H1 (cell line): ENCODE measurements at regions of chr3 and their contacts with region 1.

Region 1: GRCh38 chr3:128572644-128573105 is 77.9 kb downstream of the RPN1 start:
- DNase-seq: peak in 1 of 2 experiments; percentile 65
- H3K4me3 ChIP-seq: no peak overlapping the region
- H3K27ac ChIP-seq: no peak overlapping the region
- H3K4me1 ChIP-seq: peaks cover 6 to 13% (median 7%) of the 10 kb centered on the region in 4 experiments; a peak in 6 of 7 replicates
- H3K27me3 ChIP-seq: no peaks in the 10 kb centered on the region
- CTCF ChIP-seq: peak in 2 of 3 experiments; percentile 58 to 79; a peak in 3 of 4 replicates
- EP300 ChIP-seq: no peak
- POLR2A ChIP-seq: no peak
- RAD21 ChIP-seq: peak; percentile 31 to 44; a peak in 3 of 4 replicates

Region 2: DNA sequence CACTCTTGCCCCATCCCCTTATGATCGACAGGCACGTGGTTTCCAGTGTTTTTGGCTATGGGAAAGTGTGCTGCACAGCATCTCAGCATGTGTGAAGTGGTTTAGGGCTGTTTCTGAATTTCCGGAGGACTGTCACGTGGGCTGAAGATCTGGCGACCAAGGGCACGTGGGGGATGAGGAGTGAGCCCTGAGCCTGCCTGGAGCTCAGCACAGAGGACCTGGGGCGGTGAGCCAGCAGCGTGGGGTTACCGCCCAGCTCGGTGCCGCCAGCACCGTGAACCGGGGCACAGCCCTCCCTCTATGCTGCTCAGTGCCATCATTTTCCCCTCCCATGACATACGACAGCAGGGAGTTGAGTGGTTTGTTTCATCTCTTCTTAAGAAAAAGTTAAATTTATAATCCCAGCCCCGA is 256.2 kb before region 1 on chr3:
- CTCF ChIA-PET with region 1: no interaction called
- POLR2A ChIA-PET with region 1: no interaction called
- DNase-seq: peak in 1 of 2 experiments; percentile 40
- H3K4me3 ChIP-seq: no peak overlapping the region
- H3K27ac ChIP-seq: no peak overlapping the region
- H3K4me1 ChIP-seq: peaks cover 0 to 4% (median 0%) of the 10 kb centered on the region in 4 experiments; a peak in 1 of 7 replicates
- H3K27me3 ChIP-seq: no peaks in the 10 kb centered on the region
- CTCF ChIP-seq: no peak
- EP300 ChIP-seq: no peak
- POLR2A ChIP-seq: no peak
- RAD21 ChIP-seq: no peak

Region 3: GRCh38 chr3:128503164-128503651 is 69.5 kb before region 1 on chr3:
- CTCF ChIA-PET with region 1: interaction called, 15 read pairs
- POLR2A ChIA-PET with region 1: no interaction called
- DNase-seq: peak in 1 of 2 experiments; percentile 50
- H3K4me3 ChIP-seq: no peak overlapping the region
- H3K27ac ChIP-seq: no peak overlapping the region; the same call in 1 of the 2 replicates
- H3K4me1 ChIP-seq: peaks cover 0 to 2% (median 0%) of the 10 kb centered on the region in 4 experiments; a peak in 1 of 7 replicates
- H3K27me3 ChIP-seq: peaks cover 0 to 11% (median 10%) of the 10 kb centered on the region in 4 experiments; a peak in 6 of 7 replicates
- CTCF ChIP-seq: peak in 2 of 3 experiments; percentile 56 to 64; a peak in 3 of 4 replicates
- EP300 ChIP-seq: no peak
- POLR2A ChIP-seq: no peak
- RAD21 ChIP-seq: peak; percentile 54 to 70

Region 4: GRCh38 chr3:128515967-128516366 is 56.7 kb before region 1 on chr3:
- CTCF ChIA-PET with region 1: no interaction called
- POLR2A ChIA-PET with region 1: no interaction called
- DNase-seq: no peak
- H3K4me3 ChIP-seq: no peak overlapping the region
- H3K27ac ChIP-seq: no peak overlapping the region
- H3K4me1 ChIP-seq: no peaks in the 10 kb centered on the region
- H3K27me3 ChIP-seq: no peaks in the 10 kb centered on the region
- CTCF ChIP-seq: no peak
- EP300 ChIP-seq: no peak
- POLR2A ChIP-seq: no peak
- RAD21 ChIP-seq: no peak

Region 5: GRCh38 chr3:128549283-128550112 is 23.2 kb before region 1 on chr3:
- CTCF ChIA-PET with region 1: interaction called, 10 read pairs
- POLR2A ChIA-PET with region 1: interaction called, 3 read pairs
- DNase-seq: no peak
- H3K4me3 ChIP-seq: no peak overlapping the region
- H3K27ac ChIP-seq: no peak overlapping the region
- H3K4me1 ChIP-seq: peaks cover 0 to 9% (median 3%) of the 10 kb centered on the region in 4 experiments; a peak in 4 of 7 replicates
- H3K27me3 ChIP-seq: peaks cover 0 to 13% (median 7%) of the 10 kb centered on the region in 4 experiments; a peak in 6 of 7 replicates
- CTCF ChIP-seq: no peak
- EP300 ChIP-seq: no peak
- POLR2A ChIP-seq: no peak
- RAD21 ChIP-seq: no peak

Region 6: DNA sequence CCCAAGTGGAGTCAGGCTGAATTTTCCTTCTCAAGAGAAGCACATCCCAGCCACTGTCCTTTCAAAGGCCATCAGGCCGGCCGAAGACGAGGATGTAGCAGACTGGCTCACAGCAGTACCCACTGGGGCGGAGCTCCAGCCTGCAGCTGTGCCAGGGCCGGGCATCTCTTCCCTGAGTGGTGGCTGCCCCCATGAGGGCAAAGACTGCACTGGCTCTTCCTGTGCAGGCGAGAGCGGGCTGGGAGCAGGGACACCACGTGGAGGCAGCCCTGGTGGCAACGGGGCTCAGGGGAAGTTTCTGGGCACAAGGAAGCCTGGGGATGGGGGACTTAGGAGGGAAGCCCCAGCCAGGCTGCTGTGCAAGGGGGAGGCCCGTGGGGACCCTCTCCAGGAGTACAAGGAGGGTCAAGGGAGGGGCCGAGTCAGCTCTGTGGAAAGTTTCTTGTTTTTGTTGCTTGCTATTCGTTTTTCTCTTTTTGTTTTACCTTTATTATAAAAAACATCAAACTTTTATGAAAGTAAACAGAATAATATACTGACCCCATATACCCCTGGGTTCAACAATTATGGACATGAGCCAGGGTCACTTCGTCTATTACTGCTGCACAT is 11.8 kb after region 1 on chr3:
- CTCF ChIA-PET with region 1: interaction called, 71 read pairs
- POLR2A ChIA-PET with region 1: no interaction called
- DNase-seq: peak in 1 of 2 experiments; percentile 80
- H3K4me3 ChIP-seq: no peak overlapping the region
- H3K27ac ChIP-seq: no peak overlapping the region
- H3K4me1 ChIP-seq: peaks cover 0 to 3% (median 2%) of the 10 kb centered on the region in 4 experiments; a peak in 4 of 7 replicates
- H3K27me3 ChIP-seq: peaks cover 0 to 7% (median 5%) of the 10 kb centered on the region in 4 experiments; a peak in 3 of 7 replicates
- CTCF ChIP-seq: peak in 2 of 3 experiments; percentile 95 to 97; a peak in 3 of 4 replicates
- EP300 ChIP-seq: 0 out of 3 replicates have a peak, but pooled peaks of 1 of the 2 experiments have one; percentile 7
- POLR2A ChIP-seq: no peak
- RAD21 ChIP-seq: peak; percentile 98 to 100

Region 7: DNA sequence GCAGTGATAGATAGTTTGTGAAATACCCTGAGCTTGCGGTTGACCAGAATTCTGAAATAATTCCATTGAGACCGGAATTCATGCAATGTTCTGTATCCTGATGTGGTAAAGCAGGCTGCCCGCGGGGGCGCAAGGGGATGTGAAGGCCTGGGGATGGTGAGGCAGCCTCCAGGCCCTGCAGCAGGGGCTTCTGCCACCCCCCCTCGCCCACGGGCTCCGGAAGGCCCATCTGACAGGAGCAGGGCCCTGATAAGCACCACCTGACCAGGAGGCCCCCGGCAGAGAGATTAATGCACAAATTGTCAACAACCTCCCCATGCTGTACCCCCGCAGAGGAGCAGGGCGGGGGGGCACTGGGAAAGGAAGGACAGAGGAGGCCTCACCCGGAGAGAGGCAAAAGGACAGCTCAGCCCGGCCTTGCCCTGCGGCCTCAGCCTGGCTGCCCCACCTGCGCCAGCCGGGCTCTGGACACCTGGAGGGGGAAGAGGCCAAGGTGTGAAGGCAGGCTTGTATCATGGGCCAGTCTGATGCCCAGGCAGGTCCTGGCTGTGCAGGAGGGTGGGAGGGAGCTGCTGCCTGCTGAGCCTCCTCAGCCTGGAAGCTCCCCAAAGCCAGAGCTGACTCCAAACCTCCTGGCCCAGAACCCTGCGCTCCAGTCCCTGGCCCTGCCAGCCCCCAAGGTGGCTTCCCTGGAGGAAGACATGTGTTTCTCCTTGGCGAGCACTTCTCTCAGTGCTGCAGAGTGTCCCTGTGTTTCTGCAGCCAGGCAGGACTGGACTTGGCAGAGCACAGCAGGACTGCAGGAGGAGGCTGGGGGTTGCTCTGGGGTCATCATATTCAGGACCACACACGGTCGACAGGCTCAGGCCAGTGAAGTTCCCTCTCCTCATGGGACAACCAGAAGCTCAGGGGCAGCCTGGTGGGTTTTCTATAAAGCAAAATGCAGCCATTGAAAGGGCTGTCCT is 31.4 kb after region 1 on chr3:
- CTCF ChIA-PET with region 1: interaction called, 182 read pairs
- POLR2A ChIA-PET with region 1: interaction called, 3 read pairs
- DNase-seq: no peak
- H3K4me3 ChIP-seq: no peak overlapping the region
- H3K27ac ChIP-seq: no peak overlapping the region
- H3K4me1 ChIP-seq: peaks cover 0 to 2% (median 0%) of the 10 kb centered on the region in 4 experiments; a peak in 1 of 7 replicates
- H3K27me3 ChIP-seq: peaks cover 0 to 8% (median 4%) of the 10 kb centered on the region in 4 experiments; a peak in 4 of 7 replicates
- CTCF ChIP-seq: no peak
- EP300 ChIP-seq: no peak
- POLR2A ChIP-seq: no peak
- RAD21 ChIP-seq: no peak